Endothelial cell of umbilical vein (primary cell): ENCODE measurements at regions of chr6 and their contacts with region 1.

Region 1: GRCh38 chr6:13574149-13574570 is 241 bp upstream of the SIRT5 start:
- DNase-seq: peak; percentile 96
- H3K4me3 ChIP-seq: peak overlapping the region; percentile 54 to 88 (median 75)
- H3K27ac ChIP-seq: peak overlapping the region; percentile 80
- H3K4me1 ChIP-seq: peaks cover 8% of the 10 kb centered on the region
- H3K27me3 ChIP-seq: no peaks in the 10 kb centered on the region
- CTCF ChIP-seq: peak in 1 of 2 donors; percentile 40
- POLR2A ChIP-seq: peak; percentile 72

Region 2: DNA sequence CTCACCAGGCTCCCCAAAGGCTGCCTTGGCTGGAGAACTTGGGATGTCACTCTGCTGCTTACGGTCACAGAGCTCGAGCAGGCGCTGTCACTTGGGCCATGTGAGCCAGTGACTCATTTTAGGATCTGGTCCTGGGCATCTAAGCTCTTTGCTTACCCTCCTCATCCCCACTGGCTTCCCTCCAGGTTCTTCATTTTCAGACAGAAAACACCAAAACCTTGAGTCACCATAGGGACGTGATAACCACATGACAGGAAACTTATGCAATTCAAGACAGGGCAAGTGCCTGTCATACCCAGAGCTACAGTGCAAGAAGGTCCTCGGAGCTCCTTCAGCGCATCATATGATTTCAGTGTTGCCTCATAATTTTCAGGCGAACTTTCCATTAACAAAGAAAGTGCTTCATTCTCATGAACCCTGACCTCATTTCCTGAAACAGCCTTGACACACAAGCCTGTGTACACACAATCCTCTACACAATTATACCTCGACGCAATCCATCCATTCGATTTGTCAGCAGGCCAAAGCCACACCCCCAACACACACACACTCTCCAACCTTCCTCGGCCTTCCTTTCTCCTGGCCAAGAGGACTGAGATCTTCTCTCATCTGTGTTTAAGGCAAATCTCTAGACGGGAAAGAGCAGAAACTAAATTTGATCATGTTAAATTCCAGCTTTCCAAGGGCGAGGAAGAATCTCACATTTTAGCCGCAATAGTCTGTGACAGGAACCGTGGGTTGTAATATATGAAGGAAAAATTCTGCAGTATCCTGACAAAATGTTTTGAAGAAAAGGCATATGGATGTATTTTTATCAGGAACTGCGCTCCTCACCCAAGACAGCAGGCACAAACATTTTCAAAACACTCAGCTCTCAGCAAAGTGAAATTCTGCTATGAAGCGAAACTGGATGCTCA is 271.2 kb before region 1 on chr6:
- CTCF ChIA-PET with region 1: interaction called, 13 read pairs
- POLR2A ChIA-PET with region 1: interaction called, 3 read pairs
- dilution Hi-C with region 1: no loop called
- intact Hi-C with region 1: loop called (anchors 1 kb)
- DNase-seq: peak; percentile 93
- H3K4me3 ChIP-seq: peak overlapping the region in 1 of 3 experiments; percentile 15
- H3K27ac ChIP-seq: peak overlapping the region; percentile 86
- H3K4me1 ChIP-seq: peaks cover 36% of the 10 kb centered on the region
- H3K27me3 ChIP-seq: no peaks in the 10 kb centered on the region
- CTCF ChIP-seq: no peak
- POLR2A ChIP-seq: no peak

Region 3: DNA sequence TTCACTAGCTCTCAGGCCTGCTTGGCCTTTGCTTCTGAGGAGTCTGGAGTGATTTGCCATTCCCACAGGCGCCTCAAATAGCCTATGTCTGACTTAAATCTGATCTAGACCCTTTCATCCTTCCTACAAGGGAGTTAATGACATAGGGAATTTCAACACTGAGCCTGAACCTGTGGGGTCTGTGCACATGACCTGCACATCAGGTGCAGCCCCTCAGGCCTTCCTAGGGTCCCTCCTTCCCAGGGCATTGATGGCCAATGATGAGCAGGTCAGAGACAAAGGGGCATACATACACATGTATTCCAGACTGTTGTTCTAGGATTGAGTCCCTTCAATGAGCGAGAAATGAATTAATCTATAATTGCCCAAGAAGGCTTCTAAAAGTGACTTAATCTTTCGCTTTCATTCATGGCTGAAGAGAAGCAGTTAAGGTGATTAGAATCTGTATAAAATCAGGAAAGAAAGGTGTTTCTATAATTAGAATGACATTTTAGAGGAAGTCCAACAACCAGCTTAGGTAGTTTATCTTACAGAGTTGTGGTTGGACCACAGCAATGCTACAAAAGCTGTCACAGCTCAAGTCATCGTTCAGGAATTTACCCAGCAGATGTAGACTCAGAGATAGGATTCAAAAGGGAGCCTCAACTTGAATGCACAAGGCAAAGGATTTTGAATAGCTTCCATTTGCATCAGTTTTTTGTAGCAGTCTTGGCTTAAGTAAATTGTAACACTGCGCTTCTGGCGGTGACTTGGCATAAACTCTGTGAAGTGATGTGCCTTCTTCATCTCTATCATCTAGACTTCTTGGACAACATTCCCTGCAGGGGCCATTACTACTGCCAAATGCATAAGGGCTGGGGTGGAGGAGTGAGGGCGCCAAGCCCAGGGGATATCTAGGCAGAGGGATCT is 218.9 kb before region 1 on chr6:
- CTCF ChIA-PET with region 1: interaction called, 21 read pairs
- POLR2A ChIA-PET with region 1: interaction called, 4 read pairs
- dilution Hi-C with region 1: no loop called
- intact Hi-C with region 1: loop called (anchors 1 kb)
- DNase-seq: peak; percentile 69
- H3K4me3 ChIP-seq: no peak overlapping the region
- H3K27ac ChIP-seq: peak overlapping the region; percentile 89
- H3K4me1 ChIP-seq: peaks cover 28% of the 10 kb centered on the region
- H3K27me3 ChIP-seq: no peaks in the 10 kb centered on the region
- CTCF ChIP-seq: no peak
- POLR2A ChIP-seq: no peak

Region 4: GRCh38 chr6:13487122-13488014 is 86.8 kb before region 1 on chr6 and contains the start of gene GFOD1:
- CTCF ChIA-PET with region 1: interaction called, 60 read pairs
- POLR2A ChIA-PET with region 1: interaction called, 7 read pairs
- dilution Hi-C with region 1: no loop called
- intact Hi-C with region 1: loop called (anchors 1 kb)
- DNase-seq: peak; percentile 84
- H3K4me3 ChIP-seq: peak within 1 kb of the TSS; percentile 56 to 79 (median 62)
- H3K27ac ChIP-seq: peak within 1 kb of the TSS; percentile 29
- H3K4me1 ChIP-seq: peaks cover 23% of the 10 kb centered on the region
- H3K27me3 ChIP-seq: no peaks in the 10 kb centered on the region
- CTCF ChIP-seq: peak; percentile 14 to 34
- POLR2A ChIP-seq: peak; percentile 90
- total RNA-seq, gene GFOD1: 24.1 and 26.3 TPM in 2 replicates

Region 5: DNA sequence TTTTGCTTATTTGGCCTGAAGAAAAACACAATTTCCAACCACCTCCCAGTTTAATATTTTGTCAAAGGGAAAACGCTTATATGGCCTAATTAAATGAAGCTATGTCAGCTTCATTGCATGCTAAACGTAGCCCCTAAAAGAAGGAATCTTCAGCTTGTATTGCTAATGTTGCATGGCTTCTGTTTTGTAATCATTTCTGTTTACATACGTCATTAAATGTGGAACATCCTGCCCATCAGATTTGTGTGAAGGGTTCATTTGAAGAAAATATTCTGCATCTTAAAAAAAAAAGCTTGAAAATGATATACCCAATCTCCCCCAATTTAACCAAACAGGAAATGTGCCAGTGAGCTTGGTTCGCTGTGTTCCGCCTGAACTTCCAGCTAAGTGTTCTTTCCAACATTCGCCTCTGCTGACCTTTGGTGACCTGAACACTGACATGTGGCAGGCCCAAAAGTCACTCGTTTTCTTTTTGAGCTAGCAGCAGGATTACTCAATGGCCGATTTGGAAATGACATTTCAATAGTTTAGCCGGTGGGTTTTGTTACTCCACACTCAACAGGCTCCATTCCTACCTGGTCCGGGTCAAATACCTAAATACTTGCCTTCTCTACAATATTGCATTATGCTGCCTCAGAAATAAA is 12.4 kb before region 1 on chr6:
- CTCF ChIA-PET with region 1: interaction called, 62 read pairs
- POLR2A ChIA-PET with region 1: interaction called, 4 read pairs
- dilution Hi-C with region 1: no loop called
- intact Hi-C with region 1: no loop called
- DNase-seq: no peak
- H3K4me3 ChIP-seq: no peak overlapping the region
- H3K27ac ChIP-seq: no peak overlapping the region
- H3K4me1 ChIP-seq: no peaks in the 10 kb centered on the region
- H3K27me3 ChIP-seq: peaks cover 4 to 9% of the 10 kb centered on the region in 2 experiments
- CTCF ChIP-seq: no peak
- POLR2A ChIP-seq: no peak

Region 6: GRCh38 chr6:13711733-13712598 is 137.8 kb after region 1 on chr6 and contains the start of gene RANBP9:
- CTCF ChIA-PET with region 1: no interaction called
- POLR2A ChIA-PET with region 1: no interaction called
- dilution Hi-C with region 1: no loop called
- intact Hi-C with region 1: loop called (anchors 2 kb)
- DNase-seq: peak; percentile 90
- H3K4me3 ChIP-seq: peak within 1 kb of the TSS; percentile 79 to 99 (median 95)
- H3K27ac ChIP-seq: peak within 1 kb of the TSS; percentile 74
- H3K4me1 ChIP-seq: peaks cover 25% of the 10 kb centered on the region
- H3K27me3 ChIP-seq: no peaks in the 10 kb centered on the region
- CTCF ChIP-seq: no peak
- POLR2A ChIP-seq: peak; percentile 75
- total RNA-seq, gene RANBP9: 40.2 and 44.4 TPM in 2 replicates